ENCODE measurements at regions of chr1 and their contacts with region 1.

Region 1: GRCh38 chr1:68409426-68409825 is 40.3 kb downstream of the RPE65 start:
- DNase-seq: no peak
- H3K4me3 Mint-ChIP-seq: no peak overlapping the region
- H3K27ac Mint-ChIP-seq: no peak overlapping the region
- H3K4me1 Mint-ChIP-seq: no peaks in the 10 kb centered on the region
- H3K27me3 Mint-ChIP-seq: no peaks in the 10 kb centered on the region

Region 2: GRCh38 chr1:68301471-68302001 is 107.9 kb before region 1 on chr1:
- intact Hi-C with region 1: no loop called
- DNase-seq: no peak
- H3K4me3 Mint-ChIP-seq: no peak overlapping the region
- H3K27ac Mint-ChIP-seq: no peak overlapping the region
- H3K4me1 Mint-ChIP-seq: no peaks in the 10 kb centered on the region
- H3K27me3 Mint-ChIP-seq: no peaks in the 10 kb centered on the region

Region 3: GRCh38 chr1:68361346-68361910 is 48.0 kb before region 1 on chr1:
- intact Hi-C with region 1: no loop called
- DNase-seq: no peak
- H3K4me3 Mint-ChIP-seq: no peak overlapping the region
- H3K27ac Mint-ChIP-seq: no peak overlapping the region
- H3K4me1 Mint-ChIP-seq: no peaks in the 10 kb centered on the region
- H3K27me3 Mint-ChIP-seq: no peaks in the 10 kb centered on the region

Region 4: DNA sequence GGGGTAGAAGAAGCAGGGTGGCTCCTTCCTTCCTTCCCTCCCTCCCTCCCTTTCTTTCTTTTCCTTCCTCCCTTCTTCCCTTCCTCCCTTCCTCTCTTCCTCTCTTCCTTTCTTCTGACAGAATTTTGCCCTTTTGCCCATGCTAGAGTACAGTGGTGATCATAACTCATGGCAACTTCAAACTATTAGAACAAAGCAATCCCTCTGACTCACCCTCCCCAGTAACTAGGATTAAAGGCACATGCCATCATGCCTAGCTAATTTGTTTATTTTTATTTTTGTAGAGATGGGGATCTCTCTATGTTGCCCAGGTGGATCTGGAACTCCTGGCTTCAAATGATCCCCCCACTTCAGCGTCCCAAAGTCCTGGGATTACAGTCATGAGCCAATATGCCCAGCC is 50.4 kb after region 1 on chr1:
- intact Hi-C with region 1: loop called (anchors 10 kb)
- DNase-seq: no peak
- H3K4me3 Mint-ChIP-seq: no peak overlapping the region
- H3K27ac Mint-ChIP-seq: no peak overlapping the region
- H3K4me1 Mint-ChIP-seq: no peaks in the 10 kb centered on the region
- H3K27me3 Mint-ChIP-seq: no peaks in the 10 kb centered on the region

Region 5: DNA sequence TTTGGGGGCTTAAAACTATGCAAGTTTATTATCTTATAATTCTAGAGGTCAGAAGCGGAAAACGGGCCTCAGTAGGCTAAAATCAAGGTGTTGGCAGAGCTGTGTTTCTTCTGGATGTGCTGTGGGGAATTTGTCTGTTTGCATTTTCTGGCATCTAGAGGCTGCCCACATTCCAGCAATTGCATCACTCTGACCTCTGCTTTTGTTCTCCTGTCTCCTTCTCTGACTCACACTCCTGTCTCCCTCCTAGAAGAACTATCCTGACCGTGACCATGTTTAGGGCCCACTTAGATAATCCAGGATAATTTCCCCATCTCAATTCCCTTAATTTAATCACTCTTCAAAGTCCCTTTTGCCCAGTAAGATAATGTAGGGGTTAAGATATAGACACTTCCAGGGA is 214.8 kb after region 1 on chr1:
- intact Hi-C with region 1: no loop called
- DNase-seq: no peak
- H3K4me3 Mint-ChIP-seq: no peak overlapping the region
- H3K27ac Mint-ChIP-seq: no peak overlapping the region
- H3K4me1 Mint-ChIP-seq: no peaks in the 10 kb centered on the region
- H3K27me3 Mint-ChIP-seq: no peaks in the 10 kb centered on the region

Measured in activated T-helper 1 cell treated with anti-CD3 and anti-CD28 coated beads, Interleukin-12 subunit alpha, Interleukin-12 subunit beta, Interleukin-2, Interleukin-4 antibody, amounts not matched to agents 30 ng/mL and 10 ng/mL and 1 ng/mL, durations not matched to agents 14 hours and 24 hours and 36 hours (primary cell).